Panc1 (cell line): ENCODE measurements at regions of chr6 and their contacts with region 1.

Region 1: GRCh38 chr6:129498950-129499842 is 210.8 kb downstream of the ARHGAP18 start:
- DNase-seq: peak; percentile 20
- ATAC-seq: peak; percentile 85
- H3K4me3 ChIP-seq: 0 out of 4 replicates have a peak overlapping the region, but pooled peaks of 1 of the 2 experiments have one; percentile 10
- H3K27ac ChIP-seq: no peak overlapping the region
- H3K4me1 ChIP-seq: peaks cover 3% of the 10 kb centered on the region; the same call in 1 of the 2 replicates
- H3K27me3 ChIP-seq: no peaks in the 10 kb centered on the region
- CTCF ChIP-seq: peak; percentile 72

Region 2: DNA sequence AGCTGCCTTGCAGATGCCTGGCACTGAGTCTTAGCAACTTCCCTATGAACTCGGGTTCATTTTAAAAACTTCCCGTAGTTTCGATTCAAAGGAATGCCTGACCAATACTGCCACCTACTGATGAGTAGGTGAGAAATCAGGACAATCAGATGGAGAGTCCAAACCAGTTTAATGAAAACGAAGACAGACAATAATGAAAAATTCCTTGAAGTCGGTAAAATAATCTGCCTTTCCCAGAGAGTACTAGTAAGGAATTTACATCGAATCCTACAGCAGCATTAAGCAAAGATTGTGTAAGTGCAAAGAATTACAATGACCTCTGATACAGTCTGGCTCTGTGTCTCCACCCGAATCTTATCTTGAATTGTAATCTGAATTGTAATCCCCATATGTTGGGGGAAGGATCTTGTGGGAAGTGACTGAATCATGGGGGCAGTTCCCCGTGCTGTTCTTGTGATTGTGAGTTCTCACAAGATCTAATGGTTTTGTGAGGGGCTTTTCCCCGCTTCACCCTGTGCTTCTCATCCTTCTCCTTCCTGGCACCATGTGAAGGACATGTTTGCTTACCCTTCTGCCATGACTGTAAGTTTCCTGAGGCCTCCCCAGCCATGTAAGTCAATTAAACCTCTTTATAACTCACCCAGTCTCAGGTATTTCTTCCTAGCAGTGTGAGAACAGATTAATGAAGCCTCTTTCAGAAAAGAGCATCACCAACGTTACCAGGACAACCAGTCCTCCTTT is 76.4 kb after region 1 on chr6:
- CTCF ChIA-PET with region 1: interaction called, 6 read pairs
- POLR2A ChIA-PET with region 1: no interaction called
- in situ Hi-C with region 1: no loop called
- intact Hi-C with region 1: loop called (anchors 1 kb)
- DNase-seq: no peak
- ATAC-seq: peak; percentile 78
- H3K4me3 ChIP-seq: peak overlapping the region; percentile 4 to 32; a peak in 3 of 4 replicates
- H3K27ac ChIP-seq: no peak overlapping the region
- H3K4me1 ChIP-seq: no peaks in the 10 kb centered on the region
- H3K27me3 ChIP-seq: no peaks in the 10 kb centered on the region
- CTCF ChIP-seq: peak; percentile 80

Region 3: GRCh38 chr6:129730477-129731165 is 231.4 kb after region 1 on chr6:
- CTCF ChIA-PET with region 1: no interaction called
- POLR2A ChIA-PET with region 1: no interaction called
- in situ Hi-C with region 1: no loop called
- intact Hi-C with region 1: loop called (anchors 5 kb)
- DNase-seq: no peak
- ATAC-seq: peak; percentile 70
- H3K4me3 ChIP-seq: no peak overlapping the region
- H3K27ac ChIP-seq: no peak overlapping the region; the same call in 1 of the 2 replicates
- H3K4me1 ChIP-seq: no peaks in the 10 kb centered on the region
- H3K27me3 ChIP-seq: no peaks in the 10 kb centered on the region
- CTCF ChIP-seq: peak; percentile 67